A549 (cell line): ENCODE measurements at regions of chr17 and their contacts with region 1.

Region 1: DNA sequence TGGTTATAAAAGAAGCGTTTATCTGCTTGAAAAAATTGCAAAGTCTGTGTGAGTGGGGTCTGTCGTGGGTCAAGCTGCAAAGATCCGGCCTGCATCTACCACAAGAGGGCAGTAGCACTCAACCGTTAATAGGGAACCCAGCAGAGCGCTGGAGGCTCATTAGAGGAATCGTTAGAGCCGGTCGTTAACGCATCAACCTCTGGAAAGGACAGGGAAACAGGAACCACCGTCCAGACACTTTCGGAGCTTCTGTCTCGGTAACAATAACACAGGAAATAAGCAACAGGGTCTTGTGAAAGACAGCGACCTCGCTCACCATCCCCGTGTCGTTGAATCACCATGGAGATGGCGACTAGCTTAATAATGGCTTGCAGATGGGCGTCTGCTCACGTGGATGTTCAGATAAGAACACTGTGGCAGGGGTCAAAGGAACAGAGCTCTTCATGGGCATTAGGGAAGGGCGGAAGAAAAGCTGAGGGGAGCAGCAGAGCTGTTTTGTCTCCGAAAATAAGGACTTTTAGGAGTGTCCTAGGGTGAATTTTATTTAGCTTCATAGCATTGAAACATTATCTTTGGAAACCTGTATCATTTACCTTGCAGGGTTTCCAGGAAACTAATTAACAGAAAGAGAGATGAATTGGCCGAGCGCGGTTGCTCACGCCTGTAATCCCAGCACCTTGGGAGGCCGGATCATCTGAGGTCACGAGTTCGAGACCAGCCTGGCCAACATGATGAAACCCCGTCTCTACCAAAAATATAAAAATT is 11.9 kb upstream of the NSRP1 start:
- DNase-seq: peak; percentile 81 to 82
- ATAC-seq: peak; percentile 97 to 99
- H3K4me3 ChIP-seq: peak overlapping the region; percentile 42
- H3K27ac ChIP-seq: peak overlapping the region; percentile 49 to 76
- H3K4me1 ChIP-seq: 0 out of 3 replicates have a peak, but pooled peaks cover 5% of the 10 kb centered on the region
- CTCF ChIP-seq: peak; percentile 99
- EP300 ChIP-seq: no peak
- POLR2A ChIP-seq: no peak
- RAD21 ChIP-seq: peak; percentile 91 to 92

Region 2: DNA sequence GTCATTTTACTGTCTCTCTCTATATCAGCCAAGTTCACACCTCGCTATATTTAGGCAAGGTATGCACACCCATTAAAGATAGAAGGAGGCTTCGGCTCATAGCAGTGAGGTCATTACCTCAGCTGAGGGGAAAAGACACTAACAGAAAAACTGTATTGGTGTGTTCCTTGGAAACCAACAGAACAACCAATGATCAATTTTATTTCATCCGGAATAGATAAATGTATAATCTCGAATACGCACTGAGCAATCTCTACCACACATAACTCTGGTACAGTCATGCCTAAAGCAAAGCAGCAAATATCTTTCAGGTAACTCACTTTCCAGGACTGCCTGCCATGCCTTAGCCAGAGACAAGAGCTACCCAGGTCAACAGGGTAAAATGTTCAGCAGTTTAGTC is 372.1 kb before region 1 on chr17:
- CTCF ChIA-PET with region 1: no interaction called
- POLR2A ChIA-PET with region 1: no interaction called
- DNase-seq: peak in 1 of 2 experiments; percentile 49
- ATAC-seq: peak; percentile 93 to 96
- H3K4me3 ChIP-seq: no peak overlapping the region
- H3K27ac ChIP-seq: peak overlapping the region in 1 of 2 experiments; percentile 46; a peak in 3 of 6 replicates
- H3K4me1 ChIP-seq: peaks cover 41% of the 10 kb centered on the region
- CTCF ChIP-seq: no peak
- EP300 ChIP-seq: no peak
- POLR2A ChIP-seq: no peak
- RAD21 ChIP-seq: no peak

Region 3: GRCh38 chr17:30084788-30085187 is 20.0 kb before region 1 on chr17:
- CTCF ChIA-PET with region 1: interaction called, 44 read pairs
- POLR2A ChIA-PET with region 1: no interaction called
- DNase-seq: no peak
- ATAC-seq: peak in 1 of 2 experiments; percentile 11; a peak in 2 of 6 replicates
- H3K4me3 ChIP-seq: no peak overlapping the region
- H3K27ac ChIP-seq: no peak overlapping the region
- H3K4me1 ChIP-seq: no peaks in the 10 kb centered on the region
- CTCF ChIP-seq: no peak
- EP300 ChIP-seq: no peak
- POLR2A ChIP-seq: no peak
- RAD21 ChIP-seq: no peak

Region 4: DNA sequence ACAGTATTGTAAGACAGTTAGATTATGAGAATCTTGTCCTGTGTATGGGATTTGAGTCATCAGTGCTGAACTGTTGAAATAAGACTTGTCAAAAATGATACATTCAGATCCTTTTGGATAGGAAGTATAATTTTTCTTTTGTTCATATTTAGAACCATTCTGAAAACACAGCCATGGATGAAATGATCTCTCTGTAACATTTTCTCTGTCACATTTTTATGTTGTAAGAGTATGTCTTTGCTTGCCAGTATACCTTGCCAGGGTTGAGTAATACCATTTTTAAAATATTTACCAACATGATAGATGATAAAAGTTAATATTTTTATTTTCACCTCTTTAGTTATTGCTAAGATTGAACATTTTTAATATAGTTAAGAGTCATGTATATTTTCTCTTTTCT is 56.8 kb after region 1 on chr17:
- CTCF ChIA-PET with region 1: interaction called, 10 read pairs
- POLR2A ChIA-PET with region 1: no interaction called
- DNase-seq: no peak
- ATAC-seq: no peak
- H3K4me3 ChIP-seq: no peak overlapping the region
- H3K27ac ChIP-seq: no peak overlapping the region
- H3K4me1 ChIP-seq: peaks cover 8% of the 10 kb centered on the region; the same call in 1 of the 3 replicates
- CTCF ChIP-seq: no peak
- EP300 ChIP-seq: no peak
- POLR2A ChIP-seq: no peak
- RAD21 ChIP-seq: no peak

Region 5: GRCh38 chr17:30271102-30271501 is 166.3 kb after region 1 on chr17:
- CTCF ChIA-PET with region 1: interaction called, 19 read pairs
- POLR2A ChIA-PET with region 1: no interaction called
- DNase-seq: peak in 1 of 2 experiments; percentile 40
- ATAC-seq: peak in 1 of 2 experiments; percentile 84; a peak in 3 of 6 replicates
- H3K4me3 ChIP-seq: no peak overlapping the region
- H3K27ac ChIP-seq: no peak overlapping the region
- H3K4me1 ChIP-seq: peaks cover 19% of the 10 kb centered on the region
- CTCF ChIP-seq: no peak
- EP300 ChIP-seq: no peak
- POLR2A ChIP-seq: no peak
- RAD21 ChIP-seq: no peak

Region 6: GRCh38 chr17:30299000-30299399 is 194.2 kb after region 1 on chr17:
- CTCF ChIA-PET with region 1: interaction called, 14 read pairs
- POLR2A ChIA-PET with region 1: no interaction called
- DNase-seq: peak in 1 of 2 experiments; percentile 34
- ATAC-seq: 0 out of 6 replicates have a peak, but pooled peaks of 1 of the 2 experiments have one; percentile 29
- H3K4me3 ChIP-seq: no peak overlapping the region
- H3K27ac ChIP-seq: no peak overlapping the region
- H3K4me1 ChIP-seq: no peaks in the 10 kb centered on the region
- CTCF ChIP-seq: peak; percentile 67
- EP300 ChIP-seq: no peak
- POLR2A ChIP-seq: no peak
- RAD21 ChIP-seq: peak; percentile 44 to 62

Region 7: DNA sequence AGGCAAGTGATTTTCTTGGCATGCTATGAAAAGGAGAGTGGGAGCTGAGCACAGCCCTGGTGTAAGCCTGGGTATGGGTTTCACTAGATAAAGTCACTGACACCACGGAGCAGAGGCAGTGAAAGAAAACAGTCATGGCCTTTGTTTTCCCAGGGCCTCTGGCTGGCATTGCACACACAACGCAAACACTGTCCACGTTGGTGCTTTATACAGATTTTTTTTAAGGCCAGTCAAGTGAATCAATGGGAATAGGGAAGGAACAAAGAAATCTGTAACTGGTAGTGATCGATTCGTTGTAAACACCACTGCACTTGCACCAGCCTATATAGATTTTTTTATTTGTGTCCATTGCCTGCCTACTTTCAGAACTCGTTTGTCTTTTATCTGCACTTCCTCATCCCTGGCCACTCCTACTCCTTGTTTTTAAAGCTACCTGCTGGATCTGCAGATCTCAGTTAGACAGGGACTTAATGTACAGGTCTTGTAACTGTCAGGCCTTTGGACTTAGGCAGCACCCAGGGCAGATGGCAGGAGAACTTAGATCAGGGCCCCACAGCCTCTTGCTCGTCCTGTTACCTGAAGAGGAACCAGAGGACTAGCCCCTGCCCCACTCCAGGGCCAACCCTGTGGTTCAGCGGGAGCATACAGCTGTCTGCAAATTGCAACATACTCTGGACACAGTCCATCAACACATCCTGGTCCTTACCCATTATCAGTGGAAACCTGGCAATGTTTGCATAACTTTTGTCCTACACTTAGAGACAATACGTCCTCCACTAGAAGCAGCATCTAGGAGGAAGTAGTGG is 239.7 kb after region 1 on chr17:
- CTCF ChIA-PET with region 1: interaction called, 98 read pairs
- POLR2A ChIA-PET with region 1: no interaction called
- DNase-seq: peak in 1 of 2 experiments; percentile 85
- ATAC-seq: peak; percentile 66 to 70
- H3K4me3 ChIP-seq: no peak overlapping the region
- H3K27ac ChIP-seq: peak overlapping the region; percentile 77 to 82
- H3K4me1 ChIP-seq: peaks cover 44% of the 10 kb centered on the region
- CTCF ChIP-seq: no peak
- EP300 ChIP-seq: no peak; a peak in 1 of 5 replicates
- POLR2A ChIP-seq: no peak
- RAD21 ChIP-seq: no peak